GM12878 (cell line): ENCODE measurements at regions of chr17 and their contacts with region 1.

Region 1: DNA sequence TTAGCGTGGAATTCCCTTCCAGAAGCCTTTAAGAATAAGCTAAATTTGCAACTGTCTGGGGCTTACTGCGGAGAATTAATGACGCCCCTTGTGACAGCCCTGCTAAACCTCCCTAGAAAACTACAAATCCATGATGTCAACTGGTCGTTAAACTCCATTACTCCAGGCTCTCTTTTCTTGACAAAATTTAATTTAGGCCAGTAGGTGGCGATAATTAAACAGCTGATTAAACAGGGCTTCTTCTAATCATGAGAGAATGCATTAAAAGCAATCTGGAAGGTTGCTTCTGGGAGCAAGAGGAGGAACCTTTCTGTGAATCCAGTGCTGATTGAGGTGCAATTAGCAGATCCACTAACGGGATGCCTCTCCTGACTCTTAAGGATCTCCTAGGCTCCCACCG is 8.1 kb upstream of the NLRP1 start:
- DNase-seq: no peak
- ATAC-seq: peak; percentile 70
- H3K4me3 ChIP-seq: no peak overlapping the region
- H3K27ac ChIP-seq: no peak overlapping the region
- H3K4me1 ChIP-seq: no peaks in the 10 kb centered on the region
- H3K27me3 ChIP-seq: no peaks in the 10 kb centered on the region
- CTCF ChIP-seq: peak; percentile 31 to 67 (median 50); a peak in 4 of 6 replicates
- EP300 ChIP-seq: no peak
- POLR2A ChIP-seq: no peak
- RAD21 ChIP-seq: peak; percentile 81

Region 2: DNA sequence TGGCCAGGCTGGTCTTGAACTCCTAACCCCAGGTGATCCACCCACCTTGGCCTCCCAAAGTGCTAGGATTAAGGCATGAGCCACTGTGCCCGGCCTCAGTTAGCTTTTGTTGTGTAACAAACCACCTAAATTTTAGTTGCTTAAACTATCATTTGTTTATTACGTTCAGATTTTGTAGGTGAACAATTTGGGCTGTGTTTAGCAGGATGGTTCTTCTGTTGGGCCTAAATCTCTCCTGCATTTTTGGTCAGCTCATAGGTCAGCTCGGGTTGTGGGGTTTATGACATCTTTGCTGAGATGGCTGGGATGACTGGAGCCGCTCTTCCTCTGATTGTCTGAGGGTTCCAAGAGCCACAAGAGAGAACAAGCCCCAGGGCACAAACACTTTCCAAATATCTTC is 13.1 kb after region 1 on chr17:
- CTCF ChIA-PET with region 1: interaction called, 8 read pairs
- POLR2A ChIA-PET with region 1: no interaction called
- RAD21 ChIA-PET with region 1: no interaction called
- SMC1A ChIA-PET with region 1: interaction called, 11 read pairs
- in situ Hi-C with region 1: no loop called
- intact Hi-C with region 1: no loop called
- DNase-seq: no peak
- ATAC-seq: no peak
- H3K4me3 ChIP-seq: no peak overlapping the region
- H3K27ac ChIP-seq: no peak overlapping the region
- H3K4me1 ChIP-seq: no peaks in the 10 kb centered on the region
- H3K27me3 ChIP-seq: no peaks in the 10 kb centered on the region
- CTCF ChIP-seq: no peak
- EP300 ChIP-seq: no peak
- POLR2A ChIP-seq: no peak
- RAD21 ChIP-seq: no peak

Region 3: GRCh38 chr17:5615476-5615875 is 23.1 kb after region 1 on chr17:
- CTCF ChIA-PET with region 1: no interaction called
- POLR2A ChIA-PET with region 1: no interaction called
- RAD21 ChIA-PET with region 1: no interaction called
- SMC1A ChIA-PET with region 1: no interaction called
- in situ Hi-C with region 1: no loop called
- intact Hi-C with region 1: no loop called
- DNase-seq: no peak
- ATAC-seq: no peak
- H3K4me3 ChIP-seq: no peak overlapping the region
- H3K27ac ChIP-seq: no peak overlapping the region
- H3K4me1 ChIP-seq: peaks cover 13% of the 10 kb centered on the region
- H3K27me3 ChIP-seq: no peaks in the 10 kb centered on the region
- CTCF ChIP-seq: no peak
- EP300 ChIP-seq: no peak
- POLR2A ChIP-seq: no peak
- RAD21 ChIP-seq: no peak

Region 4: DNA sequence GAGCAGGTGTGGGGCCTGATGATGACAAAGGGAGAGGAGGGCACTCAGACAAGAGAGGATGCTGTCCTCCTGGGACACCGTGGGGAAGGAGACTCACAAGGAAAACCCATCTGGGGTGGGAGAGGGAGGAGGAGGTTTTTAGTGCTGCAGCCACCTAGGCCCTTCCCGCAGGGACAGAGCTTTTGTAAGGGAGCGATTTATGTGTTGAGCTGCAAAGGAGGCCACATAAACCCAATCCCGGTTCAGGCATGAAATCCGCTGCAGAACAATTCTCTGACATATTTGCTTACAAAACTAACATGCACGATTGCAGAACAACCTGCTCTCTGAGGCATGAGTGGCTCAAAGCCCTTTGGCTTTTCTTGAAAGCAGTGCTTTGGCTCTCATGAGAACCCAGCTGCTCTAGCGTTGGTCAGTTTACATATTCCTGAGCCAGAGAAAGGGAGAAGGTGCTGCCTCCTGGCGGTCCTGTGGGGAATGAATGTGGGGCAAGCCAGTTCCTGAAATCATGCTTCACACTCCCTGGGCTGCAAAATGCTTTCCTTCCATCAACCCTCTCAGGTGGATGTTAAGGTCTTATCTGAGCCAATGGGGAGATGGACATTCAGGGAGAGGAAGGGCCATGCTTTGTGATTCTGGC is 114.3 kb after region 1 on chr17:
- CTCF ChIA-PET with region 1: interaction called, 50 read pairs
- POLR2A ChIA-PET with region 1: no interaction called
- RAD21 ChIA-PET with region 1: interaction called, 12 read pairs
- SMC1A ChIA-PET with region 1: interaction called, 8 read pairs
- in situ Hi-C with region 1: loop called (anchors 5 kb)
- intact Hi-C with region 1: loop called (anchors 1 kb)
- DNase-seq: peak; percentile 8
- ATAC-seq: peak; percentile 82
- H3K4me3 ChIP-seq: no peak overlapping the region
- H3K27ac ChIP-seq: no peak overlapping the region
- H3K4me1 ChIP-seq: no peaks in the 10 kb centered on the region
- H3K27me3 ChIP-seq: peaks cover under 1 to 2% of the 10 kb centered on the region in 2 experiments; a peak in 3 of 4 replicates
- CTCF ChIP-seq: peak; percentile 82 to 92 (median 87)
- EP300 ChIP-seq: no peak
- POLR2A ChIP-seq: no peak
- RAD21 ChIP-seq: peak; percentile 68

Region 5: DNA sequence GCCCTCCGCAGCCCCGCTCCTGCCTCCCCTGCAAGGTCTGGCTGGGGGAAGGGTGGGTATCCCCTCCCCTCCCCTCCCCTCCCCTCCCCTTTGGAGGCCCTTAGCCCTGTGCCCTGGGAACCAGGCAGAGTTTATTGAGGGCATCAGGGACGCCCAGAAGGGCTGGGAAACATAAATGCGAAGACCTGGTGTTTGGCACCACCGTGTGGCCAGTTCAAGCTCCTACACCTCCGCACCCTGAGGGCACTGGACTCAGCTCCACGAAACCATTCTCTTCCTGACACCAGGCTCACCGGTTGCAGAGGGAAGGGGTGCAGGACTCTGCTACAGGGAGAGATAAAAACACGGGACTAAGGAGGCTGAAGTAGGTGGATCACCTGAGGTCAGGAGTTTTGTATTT is 843.6 kb after region 1 on chr17:
- CTCF ChIA-PET with region 1: interaction called, 23 read pairs
- POLR2A ChIA-PET with region 1: no interaction called
- RAD21 ChIA-PET with region 1: no interaction called
- SMC1A ChIA-PET with region 1: no interaction called
- in situ Hi-C with region 1: no loop called
- intact Hi-C with region 1: loop called (anchors 5 kb)
- DNase-seq: no peak
- ATAC-seq: peak; percentile 96
- H3K4me3 ChIP-seq: no peak overlapping the region
- H3K27ac ChIP-seq: no peak overlapping the region
- H3K4me1 ChIP-seq: no peaks in the 10 kb centered on the region
- H3K27me3 ChIP-seq: no peaks in the 10 kb centered on the region
- CTCF ChIP-seq: peak; percentile 83 to 88 (median 85)
- EP300 ChIP-seq: no peak
- POLR2A ChIP-seq: no peak
- RAD21 ChIP-seq: peak; percentile 75